ENCODE measurements at regions of chr17 and their contacts with region 1.

Region 1: GRCh38 chr17:82668631-82669099 is 20.4 kb upstream of the WDR45B start:
- DNase-seq: peak; percentile 73
- H3K4me3 ChIP-seq: no peak overlapping the region
- H3K27ac ChIP-seq: no peak overlapping the region
- H3K4me1 ChIP-seq: peaks cover 6% of the 10 kb centered on the region
- CTCF ChIP-seq: peak; percentile 80

Region 2: GRCh38 chr17:82734987-82735866 is 66.6 kb after region 1 on chr17 and contains the start of gene FN3K:
- CTCF ChIA-PET with region 1: no interaction called
- POLR2A ChIA-PET with region 1: no interaction called
- intact Hi-C with region 1: no loop called
- DNase-seq: no peak
- H3K4me3 ChIP-seq: no peak within 1 kb of the TSS
- H3K27ac ChIP-seq: no peak within 1 kb of the TSS
- H3K4me1 ChIP-seq: no peaks in the 10 kb centered on the region
- CTCF ChIP-seq: no peak
- total RNA-seq, gene FN3K: 3.8 and 5.0 TPM in 2 replicates

Region 3: GRCh38 chr17:82745524-82745923 is 76.9 kb after region 1 on chr17:
- CTCF ChIA-PET with region 1: no interaction called
- POLR2A ChIA-PET with region 1: no interaction called
- intact Hi-C with region 1: loop called (anchors 5 kb)
- DNase-seq: no peak
- H3K4me3 ChIP-seq: no peak overlapping the region
- H3K27ac ChIP-seq: no peak overlapping the region
- H3K4me1 ChIP-seq: no peaks in the 10 kb centered on the region
- CTCF ChIP-seq: no peak

Region 4: GRCh38 chr17:82767041-82767754 is 98.5 kb after region 1 on chr17:
- CTCF ChIA-PET with region 1: no interaction called
- POLR2A ChIA-PET with region 1: no interaction called
- intact Hi-C with region 1: loop called (anchors 1 kb)
- DNase-seq: peak; percentile 73
- H3K4me3 ChIP-seq: no peak overlapping the region
- H3K27ac ChIP-seq: no peak overlapping the region
- H3K4me1 ChIP-seq: no peaks in the 10 kb centered on the region
- CTCF ChIP-seq: peak; percentile 92